Endothelial cell of umbilical vein (primary cell): ENCODE measurements at regions of chr15 and their contacts with region 1.

Region 1: GRCh38 chr15:61130945-61131942 is 97.9 kb downstream of the RORA start:
- DNase-seq: no peak
- H3K4me3 ChIP-seq: no peak overlapping the region
- H3K27ac ChIP-seq: no peak overlapping the region
- H3K4me1 ChIP-seq: no peaks in the 10 kb centered on the region
- H3K27me3 ChIP-seq: peaks cover 13 to 20% of the 10 kb centered on the region in 2 experiments
- CTCF ChIP-seq: no peak
- POLR2A ChIP-seq: no peak

Region 2: GRCh38 chr15:61146931-61147230 is 15.6 kb after region 1 on chr15:
- CTCF ChIA-PET with region 1: no interaction called
- POLR2A ChIA-PET with region 1: no interaction called
- dilution Hi-C with region 1: no loop called
- intact Hi-C with region 1: loop called (anchors 1 kb)
- DNase-seq: no peak
- H3K4me3 ChIP-seq: no peak overlapping the region
- H3K27ac ChIP-seq: no peak overlapping the region
- H3K4me1 ChIP-seq: no peaks in the 10 kb centered on the region
- H3K27me3 ChIP-seq: peaks cover 0 to 5% of the 10 kb centered on the region in 2 experiments
- CTCF ChIP-seq: no peak
- POLR2A ChIP-seq: no peak

Region 3: DNA sequence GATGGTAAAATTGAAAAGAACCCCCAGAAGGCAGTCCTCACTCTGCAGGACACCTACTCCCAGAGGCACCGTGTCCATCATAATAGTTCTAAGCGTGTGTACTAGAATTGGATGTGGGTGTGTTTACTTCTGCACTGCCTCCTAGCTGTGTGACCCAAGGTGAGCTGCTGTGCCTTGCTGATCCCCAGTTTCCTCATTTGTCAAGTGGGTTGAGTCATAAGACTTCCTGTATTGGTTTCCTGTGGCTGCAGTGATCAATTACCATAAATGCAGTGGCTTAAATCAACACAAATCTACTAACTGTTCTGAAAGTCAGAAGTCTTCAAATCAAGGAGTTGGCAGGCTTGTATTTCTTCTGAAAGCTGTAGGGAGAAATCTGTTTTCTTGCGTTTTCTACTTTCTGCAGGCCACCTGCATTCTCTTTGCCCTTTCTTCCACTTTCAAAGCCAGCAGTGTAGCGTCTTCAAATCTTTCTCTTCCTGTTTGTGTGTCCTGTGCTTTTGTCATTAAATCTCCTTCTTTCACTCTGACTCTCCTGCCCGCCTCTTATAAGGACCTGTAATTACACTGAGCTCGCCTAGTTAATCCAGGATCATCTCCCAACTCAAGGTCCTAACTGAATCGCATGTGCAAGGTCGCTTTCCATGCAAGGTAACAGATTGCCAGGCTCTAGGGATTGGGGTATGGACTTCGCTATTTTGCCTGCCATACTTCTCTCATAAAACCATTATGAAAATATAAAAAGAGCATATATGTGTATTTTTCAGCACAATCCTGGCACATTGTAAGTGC is 38.9 kb after region 1 on chr15:
- CTCF ChIA-PET with region 1: no interaction called
- POLR2A ChIA-PET with region 1: no interaction called
- dilution Hi-C with region 1: no loop called
- intact Hi-C with region 1: no loop called
- DNase-seq: no peak
- H3K4me3 ChIP-seq: no peak overlapping the region
- H3K27ac ChIP-seq: no peak overlapping the region
- H3K4me1 ChIP-seq: peaks cover 13% of the 10 kb centered on the region
- H3K27me3 ChIP-seq: no peaks in the 10 kb centered on the region
- CTCF ChIP-seq: no peak
- POLR2A ChIP-seq: no peak